ENCODE measurements at regions of chr4 and their contacts with region 1.

Region 1: DNA sequence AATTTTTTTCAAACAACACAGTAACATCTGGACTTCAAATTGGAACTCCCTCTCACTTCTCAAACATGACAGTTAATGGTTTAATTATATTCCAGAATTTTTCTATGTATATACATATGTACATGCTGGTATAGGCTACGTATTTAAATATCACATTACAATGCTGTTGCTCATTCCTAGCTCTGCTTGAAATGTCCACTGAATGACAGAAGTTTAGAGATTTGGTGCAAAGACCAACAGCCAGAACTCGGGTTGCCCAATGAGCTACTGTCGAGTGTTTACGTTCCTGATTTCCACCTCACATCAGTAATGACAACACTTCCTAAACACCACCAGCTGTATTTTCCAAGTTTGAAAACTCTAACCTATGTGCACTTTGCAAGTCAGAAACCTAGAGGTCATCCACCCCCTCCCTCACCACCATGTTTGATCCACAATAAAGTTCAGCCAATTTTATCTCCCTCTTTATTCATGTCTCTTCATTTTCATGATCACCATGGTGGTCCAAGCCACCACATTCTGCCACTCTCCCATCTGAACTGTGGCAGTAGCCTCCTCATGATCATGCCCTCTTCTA is 49.3 kb upstream of the RPL34 start:
- DNase-seq: no peak
- H3K4me3 ChIP-seq: no peak overlapping the region
- H3K27ac ChIP-seq: no peak overlapping the region
- H3K4me1 ChIP-seq: no peaks in the 10 kb centered on the region
- CTCF ChIP-seq: no peak

Region 2: DNA sequence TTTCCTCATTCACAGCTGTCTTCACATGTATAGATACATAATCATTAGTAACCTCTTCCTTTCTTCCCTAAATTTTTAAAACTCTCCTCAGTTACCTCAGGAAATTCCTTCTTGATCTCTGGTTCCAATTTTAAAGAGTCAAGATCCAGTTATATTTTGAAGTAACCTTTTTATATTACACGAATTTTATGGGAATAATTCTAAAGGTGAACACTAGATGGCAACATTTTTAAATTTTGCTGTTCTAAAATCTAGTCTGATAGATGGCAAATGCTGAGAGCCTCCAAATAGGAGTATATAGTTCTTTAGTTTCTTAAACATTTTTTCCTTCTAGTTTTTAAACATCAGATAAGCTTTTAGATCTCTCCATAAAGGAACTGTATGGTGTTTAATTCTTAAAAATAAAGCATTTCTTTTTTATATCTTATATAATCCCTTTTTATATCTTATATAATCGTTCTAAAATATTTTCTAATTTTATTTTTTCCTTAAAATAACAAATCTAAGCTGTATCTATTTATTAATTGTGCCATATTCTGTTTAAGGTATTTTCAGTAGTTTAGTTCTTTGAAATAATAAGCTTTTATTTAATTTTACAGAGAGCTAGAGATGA is 813.1 kb before region 1 on chr4:
- CTCF ChIA-PET with region 1: no interaction called
- POLR2A ChIA-PET with region 1: no interaction called
- intact Hi-C with region 1: loop called (anchors 5 kb)
- DNase-seq: peak; percentile 48
- H3K4me3 ChIP-seq: no peak overlapping the region
- H3K27ac ChIP-seq: no peak overlapping the region
- H3K4me1 ChIP-seq: no peaks in the 10 kb centered on the region
- CTCF ChIP-seq: peak; percentile 87

Region 3: DNA sequence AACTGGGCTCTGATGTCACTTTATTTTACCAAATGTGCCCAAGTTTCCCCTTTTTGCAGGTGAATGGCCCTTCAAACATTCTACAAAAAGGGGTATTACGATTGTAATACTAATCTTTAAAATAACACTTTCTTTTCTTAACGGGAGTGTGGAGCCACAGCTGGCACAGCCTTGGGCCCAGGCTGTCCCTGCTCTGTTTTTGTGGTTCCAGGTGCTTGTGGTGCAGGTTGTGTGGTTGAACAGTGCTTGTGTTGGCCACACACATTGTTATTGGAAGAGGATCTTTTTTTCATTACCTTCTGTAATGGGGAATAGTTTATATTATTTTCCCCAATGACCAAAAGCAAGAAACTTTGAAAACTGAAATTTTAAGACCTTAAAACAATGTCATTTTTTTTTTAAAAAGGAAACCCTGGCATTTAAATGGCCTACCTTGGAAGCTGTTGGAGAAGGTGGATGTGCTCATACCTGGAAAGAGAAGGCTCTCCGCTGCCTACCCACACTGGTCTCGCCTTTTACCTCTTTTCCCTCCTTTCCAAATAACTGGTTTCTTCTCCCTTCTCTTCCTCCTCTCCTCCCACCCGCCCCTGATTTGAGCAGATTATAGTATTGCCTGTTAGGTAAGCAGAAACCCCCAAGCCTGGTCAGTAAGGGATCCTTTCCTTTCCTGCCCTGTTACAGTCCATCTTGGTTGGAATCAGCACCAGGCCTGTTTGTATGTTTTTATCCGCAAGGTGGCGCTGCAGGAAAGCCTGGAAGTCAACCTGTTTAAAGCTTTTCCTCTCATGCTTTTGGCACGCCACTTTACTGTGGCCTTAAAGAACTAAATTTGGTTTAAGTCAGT is 552.8 kb before region 1 on chr4:
- CTCF ChIA-PET with region 1: interaction called, 4 read pairs
- POLR2A ChIA-PET with region 1: no interaction called
- intact Hi-C with region 1: loop called (anchors 5 kb)
- DNase-seq: peak; percentile 80
- H3K4me3 ChIP-seq: no peak overlapping the region
- H3K27ac ChIP-seq: no peak overlapping the region
- H3K4me1 ChIP-seq: peaks cover 5% of the 10 kb centered on the region
- CTCF ChIP-seq: peak; percentile 98

Region 4: GRCh38 chr4:108172753-108173598 is 398.1 kb before region 1 on chr4:
- CTCF ChIA-PET with region 1: interaction called, 5 read pairs
- POLR2A ChIA-PET with region 1: interaction called, 4 read pairs
- intact Hi-C with region 1: loop called (anchors 5 kb)
- DNase-seq: peak; percentile 64
- H3K4me3 ChIP-seq: peak overlapping the region; percentile 67
- H3K27ac ChIP-seq: no peak overlapping the region
- H3K4me1 ChIP-seq: peaks cover 49% of the 10 kb centered on the region
- CTCF ChIP-seq: no peak; the same call in 1 of the 2 replicates

Region 5: GRCh38 chr4:108560616-108561015 is 10.5 kb before region 1 on chr4:
- CTCF ChIA-PET with region 1: interaction called, 3 read pairs
- POLR2A ChIA-PET with region 1: interaction called, 10 read pairs
- intact Hi-C with region 1: no loop called
- DNase-seq: no peak
- H3K4me3 ChIP-seq: no peak overlapping the region
- H3K27ac ChIP-seq: no peak overlapping the region
- H3K4me1 ChIP-seq: peaks cover 34% of the 10 kb centered on the region
- CTCF ChIP-seq: no peak

Region 6: DNA sequence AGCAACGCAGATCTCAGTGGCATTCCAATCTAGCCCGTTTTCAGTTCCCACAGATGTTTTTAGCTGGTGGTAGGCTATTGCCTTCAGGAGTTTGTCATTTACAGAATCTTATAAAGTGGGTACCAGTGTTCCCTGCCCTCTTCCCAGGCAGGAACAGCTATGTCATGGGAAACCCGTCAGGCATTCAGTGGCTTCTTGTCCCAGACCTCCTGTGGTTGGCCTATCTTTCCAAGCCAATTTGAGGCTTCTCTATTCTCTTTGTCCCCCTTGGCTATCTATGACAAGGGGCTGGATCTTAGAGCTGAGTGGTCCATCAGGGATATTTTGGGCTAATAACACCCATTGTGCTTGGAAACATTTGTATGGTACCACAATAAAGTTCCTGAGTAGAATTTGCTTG is 15.7 kb after region 1 on chr4:
- CTCF ChIA-PET with region 1: no interaction called
- POLR2A ChIA-PET with region 1: no interaction called
- intact Hi-C with region 1: no loop called
- DNase-seq: no peak
- H3K4me3 ChIP-seq: no peak overlapping the region
- H3K27ac ChIP-seq: no peak overlapping the region
- H3K4me1 ChIP-seq: no peaks in the 10 kb centered on the region
- CTCF ChIP-seq: no peak